ENCODE measurements at regions of chr1 and their contacts with region 1.

Region 1: GRCh38 chr1:169106095-169106920 is at the start of gene ATP1B1:
- DNase-seq: peak; percentile 74 to 95
- H3K4me3 ChIP-seq: peak within 1 kb of the TSS; percentile 99
- H3K27ac ChIP-seq: peak within 1 kb of the TSS; percentile 83
- H3K4me1 ChIP-seq: peaks cover 48% of the 10 kb centered on the region
- H3K27me3 ChIP-seq: no peaks in the 10 kb centered on the region
- CTCF ChIP-seq: peak; percentile 72
- total RNA-seq, gene ATP1B1: 110 and 113 TPM in 2 replicates

Region 2: DNA sequence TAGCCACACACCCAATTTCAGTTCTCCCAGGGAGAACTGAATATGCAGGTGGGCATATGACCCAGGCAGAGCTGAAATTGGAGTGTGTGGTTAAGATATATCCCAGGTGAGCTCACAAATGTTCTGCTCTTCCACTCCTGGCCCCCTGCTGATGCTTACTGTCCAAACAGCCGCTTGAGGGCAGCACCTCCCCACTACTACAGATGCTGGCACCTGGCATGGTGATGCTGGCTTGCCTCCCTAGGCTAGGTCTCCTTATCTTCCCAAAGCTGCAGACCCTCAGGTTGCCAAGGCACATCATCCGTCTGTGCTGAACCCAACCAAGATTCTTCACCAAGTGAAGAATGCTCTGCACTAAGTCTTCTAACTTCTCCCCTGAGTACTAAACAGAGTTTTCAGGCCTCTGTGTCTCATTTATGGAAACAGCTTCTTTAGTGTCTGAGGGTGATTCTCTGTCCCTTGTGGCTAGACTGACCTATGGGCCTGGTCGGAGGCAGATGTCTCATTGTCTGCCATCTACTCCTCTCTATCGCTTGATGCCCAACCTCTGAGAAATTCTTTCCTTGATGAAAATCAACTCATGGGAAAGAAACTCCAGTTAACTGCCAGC is 502.7 kb before region 1 on chr1:
- CTCF ChIA-PET with region 1: interaction called, 6 read pairs
- POLR2A ChIA-PET with region 1: no interaction called
- intact Hi-C with region 1: loop called (anchors 2 kb)
- DNase-seq: peak; percentile 47 to 71
- H3K4me3 ChIP-seq: no peak overlapping the region
- H3K27ac ChIP-seq: no peak overlapping the region
- H3K4me1 ChIP-seq: 0 out of 2 replicates have a peak, but pooled peaks cover 5% of the 10 kb centered on the region
- H3K27me3 ChIP-seq: no peaks in the 10 kb centered on the region
- CTCF ChIP-seq: peak; percentile 95

Region 3: DNA sequence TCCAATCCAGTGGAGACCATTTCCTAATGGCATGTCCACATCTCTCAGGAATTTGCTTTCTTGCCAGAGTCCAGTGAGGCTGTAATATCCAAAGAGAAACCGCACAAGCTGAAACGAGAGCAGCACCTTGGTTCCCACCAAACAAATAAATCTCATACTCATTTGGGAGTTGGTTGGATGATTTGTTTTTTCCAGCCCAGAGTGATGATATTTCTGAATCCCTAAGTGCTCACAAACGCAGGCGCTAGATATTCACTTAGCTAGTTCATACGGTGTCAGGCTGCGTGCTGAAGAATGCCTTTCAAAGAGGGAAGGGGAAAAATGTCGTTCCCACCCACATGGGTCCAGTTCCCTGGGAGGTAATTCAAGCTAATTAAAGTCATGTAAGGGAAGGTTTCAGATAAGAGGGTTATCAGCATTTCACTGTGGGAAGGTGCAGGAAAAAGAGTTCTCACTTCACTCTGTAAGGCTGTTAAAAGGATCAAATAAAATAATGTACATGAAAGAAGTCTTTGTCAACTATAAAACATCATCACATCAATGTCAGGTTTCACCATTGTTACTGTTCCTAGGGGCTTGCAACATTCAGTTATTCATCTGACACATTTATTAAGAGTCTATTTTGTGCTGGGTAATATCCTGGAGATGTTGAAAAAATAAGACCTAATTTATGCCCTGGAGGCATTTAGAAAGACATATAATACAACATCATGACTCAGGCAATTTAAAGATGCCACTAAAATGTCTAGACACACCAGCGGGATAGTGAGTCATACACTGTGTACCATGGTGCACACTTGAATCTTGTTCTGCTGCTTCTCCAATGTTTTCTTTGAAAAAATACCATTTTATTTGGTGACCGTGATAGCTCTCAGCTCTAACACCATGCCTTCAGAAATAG is 396.7 kb before region 1 on chr1:
- CTCF ChIA-PET with region 1: no interaction called
- POLR2A ChIA-PET with region 1: no interaction called
- intact Hi-C with region 1: loop called (anchors 1 kb)
- DNase-seq: peak; percentile 50 to 98
- H3K4me3 ChIP-seq: peak overlapping the region; percentile 25; the same call in 1 of the 2 replicates
- H3K27ac ChIP-seq: peak overlapping the region; percentile 93
- H3K4me1 ChIP-seq: peaks cover 27% of the 10 kb centered on the region
- H3K27me3 ChIP-seq: no peaks in the 10 kb centered on the region
- CTCF ChIP-seq: no peak

Region 4: GRCh38 chr1:168972887-168973286 is 133.4 kb before region 1 on chr1:
- CTCF ChIA-PET with region 1: no interaction called
- POLR2A ChIA-PET with region 1: interaction called, 3 read pairs
- intact Hi-C with region 1: loop called (anchors 10 kb)
- DNase-seq: no peak
- H3K4me3 ChIP-seq: no peak overlapping the region
- H3K27ac ChIP-seq: no peak overlapping the region
- H3K4me1 ChIP-seq: peaks cover 8% of the 10 kb centered on the region; the same call in 1 of the 2 replicates
- H3K27me3 ChIP-seq: no peaks in the 10 kb centered on the region
- CTCF ChIP-seq: no peak

Region 5: DNA sequence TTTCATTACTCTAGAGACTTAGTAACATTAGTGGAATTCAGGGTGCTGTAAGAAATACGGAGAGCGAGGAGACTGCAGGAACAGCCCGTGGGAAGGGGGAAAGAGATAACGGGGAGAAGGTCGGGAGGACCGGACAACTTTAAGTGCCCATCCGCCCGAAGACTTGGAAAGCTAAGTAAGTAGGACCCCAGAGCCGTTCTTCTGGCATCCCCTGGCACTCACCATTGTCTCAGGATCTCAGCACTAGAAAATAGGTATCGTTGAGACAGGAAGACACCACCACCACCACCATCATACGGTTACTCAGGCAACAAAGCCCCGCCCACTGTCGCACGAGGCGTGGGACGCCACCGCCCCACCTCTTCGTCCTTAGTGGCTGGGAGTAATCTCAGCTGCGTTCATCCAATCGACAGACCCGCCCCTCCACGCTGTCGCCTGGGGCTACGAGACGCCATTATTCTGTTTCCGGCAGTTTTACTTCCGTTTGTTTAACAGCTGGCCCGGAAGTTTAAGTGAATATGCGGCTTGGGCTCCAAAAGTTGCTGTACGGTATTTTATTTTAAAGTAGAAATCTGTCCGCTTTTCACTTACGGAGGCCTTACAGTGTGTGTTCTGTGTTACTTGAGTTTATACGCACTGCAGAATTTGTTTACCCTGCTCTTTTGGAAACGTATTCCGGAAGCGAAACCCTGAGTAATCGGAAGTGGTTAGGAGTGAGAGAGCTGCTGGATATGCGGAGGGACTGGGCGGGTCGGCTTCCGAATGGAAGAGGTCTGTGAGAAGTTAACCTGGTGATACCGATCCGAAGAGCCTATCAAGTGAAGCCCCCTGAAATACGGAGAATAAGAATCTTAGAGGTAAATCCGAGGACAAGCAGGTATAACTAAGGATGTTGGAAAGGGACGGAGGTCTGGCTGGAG is 261.4 kb after region 1 on chr1 and contains the starts of genes BLZF1 and NME7:
- CTCF ChIA-PET with region 1: no interaction called
- POLR2A ChIA-PET with region 1: interaction called, 3 read pairs
- intact Hi-C with region 1: loop called (anchors 5 kb)
- DNase-seq: peak; percentile 92 to 95
- H3K4me3 ChIP-seq: peak within 1 kb of the TSS; percentile 93
- H3K27ac ChIP-seq: peak within 1 kb of the TSS; percentile 83
- H3K4me1 ChIP-seq: peaks cover 41% of the 10 kb centered on the region
- H3K27me3 ChIP-seq: no peaks in the 10 kb centered on the region
- CTCF ChIP-seq: no peak
- total RNA-seq, gene BLZF1: 14.7 and 15.6 TPM in 2 replicates
- total RNA-seq, gene NME7: 16.5 and 21.4 TPM in 2 replicates